H1 (cell line): ENCODE measurements at regions of chr6 and their contacts with region 1.

Region 1: DNA sequence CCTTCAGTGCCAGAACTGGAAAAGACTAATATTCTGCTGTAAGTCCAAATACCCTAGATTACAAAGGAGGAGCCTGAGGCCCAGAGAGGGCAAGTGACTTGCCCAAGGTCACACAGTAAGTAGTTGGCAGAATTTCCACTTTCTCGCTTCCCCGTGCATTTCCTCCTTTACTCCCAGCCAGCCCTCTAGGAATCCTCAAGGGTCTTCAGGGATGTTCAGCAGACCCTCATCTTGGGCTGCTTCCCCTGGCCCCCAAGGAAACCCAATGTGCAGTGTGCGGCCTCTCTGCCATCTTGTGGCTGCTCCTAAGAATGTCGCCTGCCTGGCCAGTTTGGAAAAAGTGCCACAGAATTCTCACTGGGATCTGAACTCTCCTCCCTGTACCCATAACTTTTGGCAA is 217.7 kb upstream of the LRFN2 start:
- DNase-seq: no peak
- H3K4me3 ChIP-seq: no peak overlapping the region
- H3K27ac ChIP-seq: no peak overlapping the region
- H3K4me1 ChIP-seq: peaks cover 0 to 6% (median 0%) of the 10 kb centered on the region in 4 experiments; a peak in 2 of 7 replicates
- H3K27me3 ChIP-seq: no peaks in the 10 kb centered on the region
- CTCF ChIP-seq: peak; percentile 77 to 82 (median 78)
- EP300 ChIP-seq: no peak
- POLR2A ChIP-seq: no peak
- RAD21 ChIP-seq: peak; percentile 87 to 88

Region 2: GRCh38 chr6:39824030-39824926 is 980.6 kb before region 1 on chr6:
- CTCF ChIA-PET with region 1: no interaction called
- POLR2A ChIA-PET with region 1: no interaction called
- DNase-seq: no peak
- H3K4me3 ChIP-seq: no peak overlapping the region
- H3K27ac ChIP-seq: no peak overlapping the region
- H3K4me1 ChIP-seq: peaks cover 0 to 10% (median 6%) of the 10 kb centered on the region in 4 experiments; a peak in 4 of 7 replicates
- H3K27me3 ChIP-seq: peaks cover 0 to 2% (median 0%) of the 10 kb centered on the region in 4 experiments; a peak in 1 of 7 replicates
- CTCF ChIP-seq: no peak
- EP300 ChIP-seq: no peak
- POLR2A ChIP-seq: no peak
- RAD21 ChIP-seq: peak; percentile 4 to 23; a peak in 2 of 4 replicates

Region 3: GRCh38 chr6:40822619-40823018 is 17.7 kb after region 1 on chr6:
- CTCF ChIA-PET with region 1: interaction called, 24 read pairs
- POLR2A ChIA-PET with region 1: no interaction called
- DNase-seq: no peak
- H3K4me3 ChIP-seq: no peak overlapping the region
- H3K27ac ChIP-seq: no peak overlapping the region
- H3K4me1 ChIP-seq: no peaks in the 10 kb centered on the region
- H3K27me3 ChIP-seq: no peaks in the 10 kb centered on the region
- CTCF ChIP-seq: no peak
- EP300 ChIP-seq: no peak
- POLR2A ChIP-seq: no peak
- RAD21 ChIP-seq: no peak

Region 4: GRCh38 chr6:40887079-40887791 is 82.3 kb after region 1 on chr6:
- CTCF ChIA-PET with region 1: no interaction called
- POLR2A ChIA-PET with region 1: no interaction called
- DNase-seq: no peak
- H3K4me3 ChIP-seq: no peak overlapping the region
- H3K27ac ChIP-seq: no peak overlapping the region
- H3K4me1 ChIP-seq: no peaks in the 10 kb centered on the region
- H3K27me3 ChIP-seq: no peaks in the 10 kb centered on the region
- CTCF ChIP-seq: peak in 1 of 3 experiments; percentile 28; a peak in 1 of 4 replicates
- EP300 ChIP-seq: no peak
- POLR2A ChIP-seq: no peak
- RAD21 ChIP-seq: no peak; a peak in 1 of 4 replicates

Region 5: DNA sequence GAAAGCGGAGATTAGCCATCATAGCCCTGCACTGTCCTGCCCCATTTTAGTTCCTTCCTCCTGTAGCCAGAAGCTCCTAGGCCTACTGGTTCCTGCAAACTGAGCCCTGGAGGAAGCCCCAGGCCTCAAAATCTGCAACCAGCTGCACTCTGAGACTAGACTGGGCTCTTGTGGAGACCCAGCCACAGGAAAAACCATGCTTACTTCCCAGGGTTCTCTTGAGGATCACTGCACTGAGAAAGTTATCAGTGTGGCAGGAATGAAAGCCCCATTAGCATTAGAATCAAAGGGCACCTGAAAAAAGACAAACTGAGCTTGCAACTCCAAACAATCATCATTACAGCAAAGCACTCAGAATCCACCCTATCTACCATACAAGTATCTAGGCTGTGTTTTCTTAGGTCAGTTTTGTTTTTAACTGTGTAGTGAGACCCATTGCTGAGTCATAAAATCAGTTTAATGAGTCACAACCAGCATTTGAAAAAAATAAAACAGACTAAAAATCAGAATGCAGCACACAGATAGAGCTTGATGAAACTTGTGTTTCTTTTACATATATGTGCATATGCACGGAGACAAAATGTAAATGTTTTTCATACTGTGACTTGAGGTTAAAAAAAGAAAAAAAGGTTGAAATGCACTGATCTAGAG is 143.1 kb after region 1 on chr6:
- CTCF ChIA-PET with region 1: no interaction called
- POLR2A ChIA-PET with region 1: no interaction called
- DNase-seq: no peak
- H3K4me3 ChIP-seq: peak overlapping the region in 2 of 4 experiments; percentile 4 to 13; a peak in 1 of 8 replicates
- H3K27ac ChIP-seq: no peak overlapping the region
- H3K4me1 ChIP-seq: peaks cover 5 to 20% (median 18%) of the 10 kb centered on the region in 4 experiments; a peak in 6 of 7 replicates
- H3K27me3 ChIP-seq: no peaks in the 10 kb centered on the region
- CTCF ChIP-seq: no peak
- EP300 ChIP-seq: no peak
- POLR2A ChIP-seq: no peak
- RAD21 ChIP-seq: no peak